Activated CD4-positive, alpha-beta memory T cell treated with anti-CD3 and anti-CD28 coated beads, Interleukin-2, amount 10 ng/mL, durations not matched to agents 7 days and 5 days (primary cell): ENCODE measurements at regions of chr11 and their contacts with region 1.

Region 1: GRCh38 chr11:47213985-47214564 is 699 bp upstream of the DDB2 start:
- DNase-seq: peak; percentile 92
- H3K4me3 Mint-ChIP-seq: peak overlapping the region; percentile 90
- H3K27ac Mint-ChIP-seq: peak overlapping the region; percentile 100
- H3K4me1 Mint-ChIP-seq: peaks cover 48% of the 10 kb centered on the region
- H3K27me3 Mint-ChIP-seq: no peaks in the 10 kb centered on the region

Region 2: GRCh38 chr11:47176328-47177228 is 37.5 kb before region 1 on chr11 and contains the start of gene ARFGAP2:
- CTCF ChIA-PET with region 1: interaction called, 33 read pairs
- POLR2A ChIA-PET with region 1: interaction called, 124 read pairs
- DNase-seq: peak; percentile 97
- H3K4me3 Mint-ChIP-seq: peak within 1 kb of the TSS; percentile 94
- H3K27ac Mint-ChIP-seq: peak within 1 kb of the TSS; percentile 98
- H3K4me1 Mint-ChIP-seq: peaks cover 48% of the 10 kb centered on the region
- H3K27me3 Mint-ChIP-seq: no peaks in the 10 kb centered on the region
- total RNA-seq, gene ARFGAP2: 82.0 to 85.7 TPM

Region 3: GRCh38 chr11:47233989-47234668 is 20.1 kb after region 1 on chr11:
- CTCF ChIA-PET with region 1: interaction called, 5 read pairs
- POLR2A ChIA-PET with region 1: interaction called, 161 read pairs
- DNase-seq: no peak
- H3K4me3 Mint-ChIP-seq: no peak overlapping the region
- H3K27ac Mint-ChIP-seq: peak overlapping the region; percentile 77
- H3K4me1 Mint-ChIP-seq: peaks cover 26% of the 10 kb centered on the region
- H3K27me3 Mint-ChIP-seq: no peaks in the 10 kb centered on the region

Region 4: GRCh38 chr11:47248664-47249377 is 34.7 kb after region 1 on chr11 and contains the start of gene ACP2:
- CTCF ChIA-PET with region 1: interaction called, 19 read pairs
- POLR2A ChIA-PET with region 1: interaction called, 90 read pairs
- DNase-seq: peak; percentile 90
- H3K4me3 Mint-ChIP-seq: peak within 1 kb of the TSS; percentile 98
- H3K27ac Mint-ChIP-seq: peak within 1 kb of the TSS; percentile 93
- H3K4me1 Mint-ChIP-seq: peaks cover 25% of the 10 kb centered on the region
- H3K27me3 Mint-ChIP-seq: no peaks in the 10 kb centered on the region
- total RNA-seq, gene ACP2: 26.6 to 27.1 TPM

Region 5: GRCh38 chr11:47269002-47269828 is 55.1 kb after region 1 on chr11:
- CTCF ChIA-PET with region 1: interaction called, 9 read pairs
- POLR2A ChIA-PET with region 1: interaction called, 75 read pairs
- DNase-seq: peak; percentile 87
- H3K4me3 Mint-ChIP-seq: peak overlapping the region; percentile 76
- H3K27ac Mint-ChIP-seq: peak overlapping the region; percentile 97
- H3K4me1 Mint-ChIP-seq: peaks cover 59% of the 10 kb centered on the region
- H3K27me3 Mint-ChIP-seq: no peaks in the 10 kb centered on the region

Region 6: GRCh38 chr11:47565340-47566148 is 351.5 kb after region 1 on chr11 and contains the start of gene PTPMT1:
- CTCF ChIA-PET with region 1: no interaction called
- POLR2A ChIA-PET with region 1: interaction called, 10 read pairs
- DNase-seq: peak; percentile 72
- H3K4me3 Mint-ChIP-seq: peak within 1 kb of the TSS; percentile 79
- H3K27ac Mint-ChIP-seq: peak within 1 kb of the TSS; percentile 65
- H3K4me1 Mint-ChIP-seq: peaks cover 25% of the 10 kb centered on the region
- H3K27me3 Mint-ChIP-seq: no peaks in the 10 kb centered on the region
- total RNA-seq, gene PTPMT1: 42.3 to 45.2 TPM